ENCODE measurements at regions of chr2 and their contacts with region 1.

Region 1: GRCh38 chr2:29936020-29936419 is 14.6 kb upstream of the ALK start:
- DNase-seq: no peak

Region 2: GRCh38 chr2:29902356-29902755 is 33.7 kb before region 1 on chr2:
- CTCF ChIA-PET with region 1: no interaction called
- POLR2A ChIA-PET with region 1: no interaction called
- DNase-seq: no peak

Region 3: GRCh38 chr2:29923110-29923721 is 12.8 kb before region 1 on chr2:
- CTCF ChIA-PET with region 1: interaction called, 11 read pairs
- POLR2A ChIA-PET with region 1: no interaction called
- DNase-seq: peak; percentile 66

Region 4: GRCh38 chr2:30072250-30072842 is 136.3 kb after region 1 on chr2:
- CTCF ChIA-PET with region 1: no interaction called
- POLR2A ChIA-PET with region 1: no interaction called
- DNase-seq: peak; percentile 74